ENCODE measurements at regions of chr6 and their contacts with region 1.

Region 1: DNA sequence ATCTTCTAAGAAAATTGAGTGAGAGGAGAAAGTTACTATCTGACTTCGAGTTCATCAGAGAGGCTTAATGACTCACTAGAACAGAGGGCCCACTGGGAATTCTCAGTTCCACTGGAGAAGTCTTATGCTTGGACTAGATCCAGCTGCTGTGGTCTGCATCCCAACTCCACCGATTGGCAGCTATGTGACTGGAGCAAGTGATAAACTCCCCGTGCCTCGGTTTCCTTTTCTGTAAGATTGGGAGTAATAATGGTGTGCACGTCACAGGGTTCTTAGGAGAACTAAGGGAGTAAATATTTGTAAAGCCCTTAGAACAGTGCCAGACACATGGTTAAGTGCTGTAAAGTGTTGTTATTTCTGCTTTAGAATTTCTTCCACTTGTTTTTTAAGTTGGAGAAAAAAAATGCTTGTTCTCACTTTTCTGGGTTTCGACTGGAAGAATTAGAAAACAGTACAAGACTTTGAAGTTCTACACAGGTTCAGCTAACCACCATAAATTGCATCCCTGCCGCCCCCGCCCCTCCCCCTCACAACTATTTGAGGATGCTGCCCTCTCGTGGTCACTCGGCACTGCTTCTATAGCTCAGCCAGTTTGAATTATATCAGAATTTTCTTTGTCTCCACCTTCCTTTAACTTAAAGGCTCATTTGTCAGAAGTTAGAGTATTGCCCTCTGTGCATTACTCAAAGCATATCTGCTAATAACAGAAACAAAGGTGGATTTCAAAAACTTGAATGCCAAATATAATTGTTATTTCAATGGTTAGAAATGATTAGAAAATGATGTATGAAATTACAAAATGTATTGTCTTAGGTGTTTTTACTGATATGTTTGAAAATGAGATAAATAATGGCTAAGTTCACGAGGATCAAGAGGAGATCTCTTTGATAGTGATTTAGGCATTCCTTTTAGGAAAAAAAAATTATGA is 95.0 kb upstream of the IFNGR1 start:
- DNase-seq: peak; percentile 38
- H3K4me3 ChIP-seq: no peak overlapping the region
- H3K27ac ChIP-seq: no peak overlapping the region
- H3K27me3 ChIP-seq: no peaks in the 10 kb centered on the region
- CTCF ChIP-seq: peak; percentile 90

Region 2: DNA sequence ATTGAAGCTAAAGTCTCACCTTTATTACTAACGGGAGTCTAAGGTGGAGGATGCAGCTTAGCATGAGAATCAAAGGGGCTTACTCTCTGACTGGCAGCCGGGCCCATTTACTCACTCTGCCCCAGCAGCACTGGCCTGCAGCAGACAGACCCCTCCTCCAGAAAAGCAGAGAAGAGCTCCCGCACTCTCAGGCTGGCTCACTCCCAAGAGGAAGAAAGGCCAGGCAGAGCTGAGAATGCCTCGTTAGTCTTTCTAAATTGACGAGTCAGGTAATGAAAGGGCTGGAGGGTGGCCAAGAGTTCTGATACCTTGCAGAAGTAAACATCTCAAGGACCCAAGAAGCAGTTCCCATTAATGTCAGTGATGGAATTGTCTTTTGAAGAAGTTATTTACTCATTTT is 224.9 kb before region 1 on chr6:
- CTCF ChIA-PET with region 1: interaction called, 84 read pairs
- POLR2A ChIA-PET with region 1: no interaction called
- DNase-seq: no peak
- H3K4me3 ChIP-seq: no peak overlapping the region
- H3K27ac ChIP-seq: no peak overlapping the region
- H3K27me3 ChIP-seq: peaks cover 6% of the 10 kb centered on the region
- CTCF ChIP-seq: no peak

Region 3: GRCh38 chr6:137271245-137272183 is 42.7 kb before region 1 on chr6:
- CTCF ChIA-PET with region 1: interaction called, 46 read pairs
- POLR2A ChIA-PET with region 1: no interaction called
- DNase-seq: peak; percentile 10
- H3K4me3 ChIP-seq: no peak overlapping the region
- H3K27ac ChIP-seq: no peak overlapping the region
- H3K27me3 ChIP-seq: no peaks in the 10 kb centered on the region
- CTCF ChIP-seq: peak; percentile 96

Region 4: DNA sequence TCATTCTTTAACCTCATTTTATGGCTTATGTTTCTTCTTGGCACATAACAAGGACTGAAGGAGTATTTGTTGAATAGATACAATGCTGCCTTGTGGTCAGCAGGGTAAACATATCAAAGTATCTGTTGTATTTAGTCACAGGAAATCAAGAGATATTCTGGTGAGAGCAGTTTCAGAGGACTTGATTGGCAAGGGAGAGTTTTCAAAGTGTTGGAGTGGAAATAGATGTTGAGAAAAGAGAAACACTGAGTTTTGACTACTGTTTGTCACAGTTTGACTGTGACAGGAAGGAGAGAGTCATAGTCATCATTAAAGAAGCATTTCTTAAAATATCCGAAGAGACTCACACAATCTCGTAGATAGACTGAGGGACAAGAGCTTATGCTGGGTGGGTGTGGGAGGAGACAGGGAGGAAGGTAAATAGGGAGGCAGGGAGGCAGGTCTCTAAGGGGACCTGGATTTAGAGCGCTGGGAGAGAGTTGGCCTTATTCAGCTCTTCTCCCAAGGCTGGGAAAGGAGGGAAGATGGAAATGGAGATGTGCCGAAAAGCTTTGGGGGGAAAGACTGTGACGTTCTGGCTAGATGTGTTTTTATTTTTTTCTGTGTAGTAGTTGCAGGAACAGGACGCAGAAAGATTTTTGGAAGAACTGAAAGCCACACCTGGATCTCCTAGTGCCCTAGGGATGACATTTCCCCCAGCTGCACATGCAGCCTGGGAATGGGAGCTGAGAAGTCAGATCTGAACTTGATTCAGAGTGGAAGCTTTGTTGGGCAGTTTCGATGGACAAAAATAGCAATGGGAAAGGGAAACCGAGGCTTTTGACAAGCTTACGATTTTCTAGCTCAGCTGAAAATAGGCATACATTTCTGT is 30.0 kb before region 1 on chr6:
- CTCF ChIA-PET with region 1: interaction called, 11 read pairs
- POLR2A ChIA-PET with region 1: no interaction called
- DNase-seq: no peak
- H3K4me3 ChIP-seq: no peak overlapping the region
- H3K27ac ChIP-seq: no peak overlapping the region
- H3K27me3 ChIP-seq: no peaks in the 10 kb centered on the region
- CTCF ChIP-seq: no peak

Region 5: GRCh38 chr6:137297887-137298286 is 16.3 kb before region 1 on chr6:
- CTCF ChIA-PET with region 1: interaction called, 22 read pairs
- POLR2A ChIA-PET with region 1: no interaction called
- DNase-seq: no peak
- H3K4me3 ChIP-seq: no peak overlapping the region
- H3K27ac ChIP-seq: peak overlapping the region; percentile 31
- H3K27me3 ChIP-seq: no peaks in the 10 kb centered on the region
- CTCF ChIP-seq: no peak

Region 6: GRCh38 chr6:137342607-137343186 is 28.5 kb after region 1 on chr6:
- CTCF ChIA-PET with region 1: interaction called, 13 read pairs
- POLR2A ChIA-PET with region 1: no interaction called
- DNase-seq: no peak
- H3K4me3 ChIP-seq: peak overlapping the region; percentile 57
- H3K27ac ChIP-seq: no peak overlapping the region
- H3K27me3 ChIP-seq: peaks cover 4% of the 10 kb centered on the region
- CTCF ChIP-seq: no peak

Region 7: DNA sequence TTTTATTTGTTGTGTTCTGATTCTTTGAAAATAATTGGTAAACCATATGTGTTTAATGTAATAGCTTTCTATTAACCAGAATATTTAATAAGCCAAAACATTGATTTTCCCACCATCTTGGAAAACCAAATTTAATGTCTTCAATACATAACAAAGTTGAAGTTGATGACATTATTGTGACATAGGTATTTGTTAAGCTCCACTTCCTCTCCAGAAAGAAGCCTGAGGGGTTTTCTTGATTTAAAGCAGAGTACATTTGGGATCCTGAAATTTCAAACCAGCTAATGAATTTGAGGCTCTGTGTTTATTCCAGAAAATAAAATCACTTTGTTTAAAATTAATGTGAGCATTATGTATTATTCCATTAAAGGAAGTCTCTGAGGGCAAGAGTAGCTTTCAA is 686.7 kb after region 1 on chr6:
- CTCF ChIA-PET with region 1: no interaction called
- POLR2A ChIA-PET with region 1: no interaction called
- DNase-seq: no peak
- H3K4me3 ChIP-seq: no peak overlapping the region
- H3K27ac ChIP-seq: no peak overlapping the region
- H3K27me3 ChIP-seq: no peaks in the 10 kb centered on the region
- CTCF ChIP-seq: no peak

Measured in AG04450 (cell line).